RWPE1 (cell line): ENCODE measurements at regions of chr1 and their contacts with region 1.

Region 1: GRCh38 chr1:68120136-68120791 is 69.8 kb upstream of the DIRAS3 start:
- DNase-seq: peak; percentile 59
- H3K27ac ChIP-seq: no peak overlapping the region
- CTCF ChIP-seq: peak; percentile 81

Region 2: GRCh38 chr1:67535474-67535873 is 584.8 kb before region 1 on chr1:
- CTCF ChIA-PET with region 1: interaction called, 10 read pairs
- POLR2A ChIA-PET with region 1: no interaction called
- DNase-seq: peak; percentile 84
- H3K27ac ChIP-seq: peak overlapping the region; percentile 58
- CTCF ChIP-seq: peak; percentile 99

Region 3: DNA sequence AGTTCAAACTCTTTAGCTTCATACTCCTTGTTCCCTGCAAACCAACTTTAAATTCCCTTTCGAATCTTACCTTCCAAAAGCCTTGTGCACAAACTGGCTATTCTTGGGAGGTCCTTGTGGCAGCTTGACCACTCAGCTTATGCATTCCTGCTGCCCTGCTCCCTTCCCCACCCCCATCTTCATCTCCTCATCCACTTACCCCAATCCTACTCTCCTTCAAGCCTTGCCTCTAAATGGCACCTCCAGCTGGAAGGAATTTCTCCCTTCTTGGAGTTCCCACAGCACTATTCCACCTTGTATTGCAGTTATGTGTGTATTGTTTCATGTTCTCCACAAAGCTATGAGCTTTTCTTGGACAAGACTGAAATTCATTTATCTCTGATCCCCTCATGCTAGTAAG is 54.5 kb before region 1 on chr1:
- CTCF ChIA-PET with region 1: no interaction called
- POLR2A ChIA-PET with region 1: no interaction called
- DNase-seq: no peak
- H3K27ac ChIP-seq: no peak overlapping the region
- CTCF ChIP-seq: no peak

Region 4: DNA sequence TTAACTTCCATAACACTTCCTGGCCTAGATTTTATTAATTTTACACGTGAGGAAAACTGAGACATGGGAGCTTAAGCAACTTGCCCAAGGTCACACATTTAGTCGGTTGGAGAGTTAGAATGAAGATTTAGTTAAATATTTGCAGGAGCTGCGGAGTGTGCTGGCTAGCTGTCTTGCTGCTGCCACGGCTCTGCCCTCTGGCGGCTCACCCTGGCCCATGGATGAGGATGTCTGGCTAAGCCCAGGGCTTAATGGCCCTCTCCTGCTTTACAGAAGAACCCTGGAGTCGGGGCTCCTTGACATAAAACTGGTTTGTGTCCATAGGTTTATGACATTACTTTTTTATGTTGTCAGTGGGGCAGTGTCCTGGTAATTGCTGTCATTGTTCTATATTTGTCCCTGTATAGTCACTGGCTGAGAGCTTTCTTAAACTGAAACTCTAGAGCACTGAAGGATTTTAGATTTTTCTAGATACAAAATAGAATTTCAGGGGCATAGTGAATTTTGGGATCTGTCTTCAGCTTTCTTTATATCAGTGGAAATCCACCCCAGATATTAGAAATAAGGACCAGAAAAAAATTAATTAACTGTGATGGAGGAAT is 200.9 kb after region 1 on chr1:
- CTCF ChIA-PET with region 1: interaction called, 46 read pairs
- POLR2A ChIA-PET with region 1: no interaction called
- DNase-seq: peak; percentile 67
- H3K27ac ChIP-seq: no peak overlapping the region
- CTCF ChIP-seq: peak; percentile 60

Region 5: DNA sequence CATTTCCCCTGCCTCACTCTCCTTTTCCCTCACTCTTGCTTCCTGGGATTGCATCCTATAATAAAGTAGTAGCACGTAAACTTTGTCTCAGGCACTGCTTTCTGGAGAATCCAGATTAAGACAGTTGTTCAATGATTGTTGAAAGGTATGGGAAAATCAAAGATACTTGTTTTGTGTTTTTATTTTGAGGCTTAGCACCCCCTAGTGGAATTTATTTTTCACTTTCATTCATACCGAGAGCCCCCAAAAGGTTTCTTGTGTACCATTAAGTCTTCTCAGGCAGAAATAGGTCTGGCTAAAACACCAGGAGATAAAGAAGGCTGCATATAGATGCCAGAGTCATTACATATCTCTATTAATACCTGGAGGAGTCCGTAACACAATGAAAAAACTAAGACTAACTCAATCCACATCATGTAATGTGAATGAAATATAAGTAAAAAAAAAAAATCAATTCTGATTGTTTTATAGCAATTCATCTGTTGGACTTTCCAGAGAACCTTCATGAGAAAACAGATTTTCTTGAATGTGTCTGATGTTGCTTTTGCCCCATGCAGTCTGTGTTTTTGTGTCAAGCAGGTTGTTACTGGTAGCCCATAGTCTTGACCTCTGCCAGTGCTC is 226.0 kb after region 1 on chr1:
- CTCF ChIA-PET with region 1: interaction called, 16 read pairs
- POLR2A ChIA-PET with region 1: no interaction called
- DNase-seq: no peak
- H3K27ac ChIP-seq: no peak overlapping the region
- CTCF ChIP-seq: peak; percentile 24; the same call in 1 of the 2 replicates

Region 6: GRCh38 chr1:68442822-68443556 is 322.7 kb after region 1 on chr1:
- CTCF ChIA-PET with region 1: interaction called, 14 read pairs
- POLR2A ChIA-PET with region 1: no interaction called
- DNase-seq: peak; percentile 64
- H3K27ac ChIP-seq: no peak overlapping the region
- CTCF ChIP-seq: peak; percentile 40; the same call in 1 of the 2 replicates